ENCODE measurements at regions of chr1 and their contacts with region 1.

Region 1: GRCh38 chr1:153608742-153609584 is 4.0 kb downstream of the S100A16 start:
- DNase-seq: peak; percentile 88 to 98
- ATAC-seq: peak; percentile 73 to 82
- H3K4me3 ChIP-seq: peak overlapping the region; percentile 45
- H3K27ac ChIP-seq: peak overlapping the region; percentile 91 to 96
- H3K4me1 ChIP-seq: peaks cover 44% of the 10 kb centered on the region
- CTCF ChIP-seq: no peak
- EP300 ChIP-seq: no peak; a peak in 1 of 5 replicates
- POLR2A ChIP-seq: peak; percentile 46; the same call in 1 of the 2 replicates
- RAD21 ChIP-seq: no peak; a peak in 1 of 5 replicates

Region 2: GRCh38 chr1:153127296-153127695 is 481.7 kb before region 1 on chr1:
- CTCF ChIA-PET with region 1: no interaction called
- POLR2A ChIA-PET with region 1: no interaction called
- DNase-seq: no peak
- ATAC-seq: no peak
- H3K4me3 ChIP-seq: no peak overlapping the region
- H3K27ac ChIP-seq: no peak overlapping the region
- H3K4me1 ChIP-seq: no peaks in the 10 kb centered on the region
- CTCF ChIP-seq: no peak
- EP300 ChIP-seq: no peak
- POLR2A ChIP-seq: no peak
- RAD21 ChIP-seq: no peak

Region 3: GRCh38 chr1:153447498-153448170 is 161.3 kb before region 1 on chr1:
- CTCF ChIA-PET with region 1: no interaction called
- POLR2A ChIA-PET with region 1: no interaction called
- DNase-seq: peak in 1 of 2 experiments; percentile 12
- ATAC-seq: peak in 1 of 2 experiments; percentile 67; a peak in 3 of 6 replicates
- H3K4me3 ChIP-seq: no peak overlapping the region
- H3K27ac ChIP-seq: no peak overlapping the region
- H3K4me1 ChIP-seq: peaks cover 11% of the 10 kb centered on the region; the same call in 2 of the 3 replicates
- CTCF ChIP-seq: no peak
- EP300 ChIP-seq: no peak
- POLR2A ChIP-seq: no peak
- RAD21 ChIP-seq: no peak

Region 4: GRCh38 chr1:153598309-153599172 is 10.4 kb before region 1 on chr1:
- CTCF ChIA-PET with region 1: interaction called, 20 read pairs
- POLR2A ChIA-PET with region 1: interaction called, 4 read pairs
- DNase-seq: no peak
- ATAC-seq: no peak; a peak in 2 of 6 replicates
- H3K4me3 ChIP-seq: no peak overlapping the region
- H3K27ac ChIP-seq: no peak overlapping the region
- H3K4me1 ChIP-seq: peaks cover 9% of the 10 kb centered on the region
- CTCF ChIP-seq: no peak
- EP300 ChIP-seq: no peak
- POLR2A ChIP-seq: no peak
- RAD21 ChIP-seq: no peak